Activated B cell treated with CpG ODN at 0.5 μM for 24 hours (primary cell): ENCODE measurements at regions of chr6 and their contacts with region 1.

Region 1: GRCh38 chr6:89371849-89372505 is 19.5 kb upstream of the UBE2J1 start:
- DNase-seq: peak; percentile 74
- ATAC-seq: peak; percentile 93
- H3K4me3 Mint-ChIP-seq: no peak overlapping the region
- H3K27ac Mint-ChIP-seq: no peak overlapping the region
- H3K4me1 Mint-ChIP-seq: peaks cover 41% of the 10 kb centered on the region
- H3K27me3 Mint-ChIP-seq: no peaks in the 10 kb centered on the region
- CTCF ChIP-seq: peak; percentile 49

Region 2: GRCh38 chr6:88982720-88983119 is 389.3 kb before region 1 on chr6:
- CTCF ChIA-PET with region 1: interaction called, 29 read pairs
- POLR2A ChIA-PET with region 1: no interaction called
- intact Hi-C with region 1: loop called (anchors 1 kb)
- DNase-seq: no peak
- ATAC-seq: peak; percentile 71
- H3K4me3 Mint-ChIP-seq: no peak overlapping the region
- H3K27ac Mint-ChIP-seq: no peak overlapping the region
- H3K4me1 Mint-ChIP-seq: no peaks in the 10 kb centered on the region
- H3K27me3 Mint-ChIP-seq: no peaks in the 10 kb centered on the region
- CTCF ChIP-seq: peak; percentile 87

Region 3: GRCh38 chr6:89161326-89162046 is 210.5 kb before region 1 on chr6:
- CTCF ChIA-PET with region 1: no interaction called
- POLR2A ChIA-PET with region 1: no interaction called
- intact Hi-C with region 1: no loop called
- DNase-seq: no peak
- ATAC-seq: no peak
- H3K4me3 Mint-ChIP-seq: no peak overlapping the region
- H3K27ac Mint-ChIP-seq: no peak overlapping the region
- H3K4me1 Mint-ChIP-seq: no peaks in the 10 kb centered on the region
- H3K27me3 Mint-ChIP-seq: no peaks in the 10 kb centered on the region
- CTCF ChIP-seq: no peak

Region 4: DNA sequence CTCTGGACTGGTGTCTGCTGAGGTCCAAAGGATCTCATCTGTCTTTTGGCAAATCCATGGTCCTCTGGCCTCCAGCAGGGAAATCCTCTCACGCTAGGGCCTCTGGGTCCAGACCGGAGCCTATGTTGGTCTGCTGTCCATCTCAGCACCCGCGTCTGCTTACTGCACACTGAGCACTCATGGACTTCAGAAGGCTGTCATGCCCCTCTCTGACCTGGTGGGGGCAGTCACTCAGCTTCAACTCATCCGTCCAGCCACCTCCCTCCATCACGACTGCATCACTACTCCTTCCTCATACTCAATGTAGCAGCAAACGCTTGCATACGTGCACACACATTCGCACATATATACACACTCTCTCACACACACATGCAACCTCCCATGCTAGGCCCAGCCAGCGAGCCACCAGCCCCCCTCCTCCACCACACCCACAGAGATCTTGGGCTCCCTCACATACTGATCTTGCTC is 90.2 kb before region 1 on chr6:
- CTCF ChIA-PET with region 1: interaction called, 3 read pairs
- POLR2A ChIA-PET with region 1: no interaction called
- intact Hi-C with region 1: loop called (anchors 2 kb)
- DNase-seq: no peak
- ATAC-seq: peak; percentile 77
- H3K4me3 Mint-ChIP-seq: no peak overlapping the region
- H3K27ac Mint-ChIP-seq: no peak overlapping the region
- H3K4me1 Mint-ChIP-seq: peaks cover 5% of the 10 kb centered on the region
- H3K27me3 Mint-ChIP-seq: no peaks in the 10 kb centered on the region
- CTCF ChIP-seq: no peak

Region 5: DNA sequence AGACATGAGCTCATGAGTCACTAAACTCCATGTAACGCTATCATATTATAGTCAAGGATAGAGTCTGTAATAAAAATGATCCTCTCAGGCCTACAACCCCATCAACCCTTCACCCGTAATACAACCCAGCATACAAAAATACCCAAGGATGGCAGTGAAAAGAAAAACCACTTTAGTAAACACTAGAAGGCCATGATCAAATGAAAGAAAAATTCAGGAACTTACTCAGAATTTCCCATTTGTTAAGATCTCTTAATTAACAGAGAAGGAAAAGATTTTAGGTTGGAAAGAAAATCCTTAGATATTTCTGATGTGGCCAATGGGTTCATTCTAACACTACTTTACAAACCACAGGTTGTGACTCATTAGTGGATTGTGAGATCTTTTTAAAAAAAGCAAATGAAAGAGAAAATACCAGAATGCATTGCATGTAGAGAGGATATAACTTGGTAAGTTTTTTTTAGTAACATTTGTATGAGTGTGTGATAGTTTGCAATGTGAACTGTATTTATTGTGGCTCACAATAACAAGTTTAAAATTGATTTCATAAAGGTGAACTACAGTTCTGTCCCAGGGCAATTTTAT is 11.5 kb before region 1 on chr6:
- CTCF ChIA-PET with region 1: interaction called, 64 read pairs
- POLR2A ChIA-PET with region 1: interaction called, 10 read pairs
- intact Hi-C with region 1: no loop called
- DNase-seq: no peak
- ATAC-seq: peak; percentile 34
- H3K4me3 Mint-ChIP-seq: no peak overlapping the region
- H3K27ac Mint-ChIP-seq: peak overlapping the region; percentile 72
- H3K4me1 Mint-ChIP-seq: peaks cover 79% of the 10 kb centered on the region
- H3K27me3 Mint-ChIP-seq: no peaks in the 10 kb centered on the region
- CTCF ChIP-seq: no peak

Region 6: DNA sequence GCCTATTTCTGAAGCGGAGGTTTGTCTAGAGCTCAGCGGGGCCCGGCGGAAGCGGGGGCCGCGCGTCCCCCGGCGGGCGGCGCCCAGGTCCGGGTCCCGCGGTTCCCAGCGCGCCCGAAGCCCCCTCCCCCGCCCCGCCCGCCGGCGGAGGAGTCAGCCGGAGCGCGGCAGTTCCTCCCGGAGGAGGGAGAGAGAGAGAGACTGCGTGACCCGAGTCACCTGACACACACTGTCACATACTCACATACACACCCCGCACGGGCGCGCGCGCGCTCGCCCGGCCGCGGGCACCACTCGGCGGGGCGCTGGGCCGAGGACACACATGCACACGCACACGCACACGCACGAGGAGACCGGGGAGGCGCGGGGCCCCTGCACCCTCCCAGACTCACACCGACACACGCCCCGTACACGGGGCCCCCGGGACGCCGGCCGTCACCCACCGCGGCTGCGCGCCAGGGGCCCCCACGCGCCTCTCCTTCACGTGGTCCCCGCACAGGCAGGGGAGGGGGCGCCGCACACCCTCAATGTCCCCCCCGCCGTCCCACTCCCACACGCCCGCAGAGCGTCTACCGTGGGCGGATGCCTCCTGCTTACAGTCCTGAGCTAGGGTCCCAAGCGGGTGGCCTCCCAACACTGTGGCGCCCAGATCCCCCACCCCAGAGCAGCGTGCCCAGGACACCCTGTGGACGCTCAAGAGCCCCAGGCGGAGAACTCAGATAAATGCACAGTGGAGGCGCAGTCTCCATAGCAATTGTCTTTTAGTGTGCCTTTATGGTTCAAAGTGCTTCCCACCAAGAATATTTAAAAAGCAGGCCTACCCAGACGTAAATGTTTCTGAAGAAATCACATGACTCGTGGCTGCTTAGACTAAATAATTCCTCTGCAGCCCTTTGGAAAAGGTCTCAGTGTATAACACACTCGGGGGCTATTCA is 40.4 kb after region 1 on chr6 and contains the start of gene RRAGD:
- CTCF ChIA-PET with region 1: interaction called, 17 read pairs
- POLR2A ChIA-PET with region 1: interaction called, 3 read pairs
- intact Hi-C with region 1: loop called (anchors 1 kb)
- DNase-seq: peak; percentile 56
- ATAC-seq: peak; percentile 72
- H3K4me3 Mint-ChIP-seq: peak within 1 kb of the TSS; percentile 92
- H3K27ac Mint-ChIP-seq: peak within 1 kb of the TSS; percentile 56
- H3K4me1 Mint-ChIP-seq: peaks cover 21% of the 10 kb centered on the region
- H3K27me3 Mint-ChIP-seq: peaks cover 14% of the 10 kb centered on the region
- CTCF ChIP-seq: no peak
- total RNA-seq, gene RRAGD: 5.4 and 5.6 TPM in 2 replicates

Region 7: GRCh38 chr6:89610149-89610642 is 238.2 kb after region 1 on chr6:
- CTCF ChIA-PET with region 1: interaction called, 38 read pairs
- POLR2A ChIA-PET with region 1: interaction called, 3 read pairs
- intact Hi-C with region 1: loop called (anchors 1 kb)
- DNase-seq: peak; percentile 67
- ATAC-seq: peak; percentile 81
- H3K4me3 Mint-ChIP-seq: no peak overlapping the region
- H3K27ac Mint-ChIP-seq: no peak overlapping the region
- H3K4me1 Mint-ChIP-seq: no peaks in the 10 kb centered on the region
- H3K27me3 Mint-ChIP-seq: no peaks in the 10 kb centered on the region
- CTCF ChIP-seq: peak; percentile 57

Region 8: GRCh38 chr6:89655122-89655521 is 283.1 kb after region 1 on chr6:
- CTCF ChIA-PET with region 1: no interaction called
- POLR2A ChIA-PET with region 1: no interaction called
- intact Hi-C with region 1: no loop called
- DNase-seq: no peak
- ATAC-seq: no peak
- H3K4me3 Mint-ChIP-seq: no peak overlapping the region
- H3K27ac Mint-ChIP-seq: no peak overlapping the region
- H3K4me1 Mint-ChIP-seq: no peaks in the 10 kb centered on the region
- H3K27me3 Mint-ChIP-seq: no peaks in the 10 kb centered on the region
- CTCF ChIP-seq: no peak

Region 9: GRCh38 chr6:90478789-90479602 is 1107.0 kb after region 1 on chr6:
- CTCF ChIA-PET with region 1: interaction called, 4 read pairs
- POLR2A ChIA-PET with region 1: no interaction called
- intact Hi-C with region 1: loop called (anchors 10 kb)
- DNase-seq: peak; percentile 54
- ATAC-seq: peak; percentile 96
- H3K4me3 Mint-ChIP-seq: no peak overlapping the region
- H3K27ac Mint-ChIP-seq: peak overlapping the region; percentile 64
- H3K4me1 Mint-ChIP-seq: peaks cover 22% of the 10 kb centered on the region
- H3K27me3 Mint-ChIP-seq: no peaks in the 10 kb centered on the region
- CTCF ChIP-seq: peak; percentile 95